ENCODE measurements at regions of chr17 and their contacts with region 1.

Region 1: GRCh38 chr17:7367083-7367482 is 12.1 kb downstream of the TMEM95 start:
- DNase-seq: no peak
- ATAC-seq: no peak
- H3K4me3 ChIP-seq: no peak overlapping the region
- H3K27ac ChIP-seq: no peak overlapping the region
- H3K4me1 ChIP-seq: no peaks in the 10 kb centered on the region
- H3K27me3 ChIP-seq: peaks cover 0 to 3% (median 0%) of the 10 kb centered on the region in 3 donors
- CTCF ChIP-seq: no peak

Region 2: GRCh38 chr17:7429722-7430121 is 62.6 kb after region 1 on chr17:
- intact Hi-C with region 1: loop called in 1 of 2 experiments (anchors 5 kb)
- DNase-seq: no peak
- ATAC-seq: no peak
- H3K4me3 ChIP-seq: no peak overlapping the region
- H3K27ac ChIP-seq: no peak overlapping the region
- H3K4me1 ChIP-seq: no peaks in the 10 kb centered on the region
- H3K27me3 ChIP-seq: no peaks in the 10 kb centered on the region
- CTCF ChIP-seq: no peak

Measured in psoas muscle (tissue), 8 donors.